ENCODE measurements at regions of chr15 and their contacts with region 1.

Region 1: GRCh38 chr15:79184465-79184892 is 93.9 kb upstream of the RASGRF1 start:
- DNase-seq: peak; percentile 75

Region 2: DNA sequence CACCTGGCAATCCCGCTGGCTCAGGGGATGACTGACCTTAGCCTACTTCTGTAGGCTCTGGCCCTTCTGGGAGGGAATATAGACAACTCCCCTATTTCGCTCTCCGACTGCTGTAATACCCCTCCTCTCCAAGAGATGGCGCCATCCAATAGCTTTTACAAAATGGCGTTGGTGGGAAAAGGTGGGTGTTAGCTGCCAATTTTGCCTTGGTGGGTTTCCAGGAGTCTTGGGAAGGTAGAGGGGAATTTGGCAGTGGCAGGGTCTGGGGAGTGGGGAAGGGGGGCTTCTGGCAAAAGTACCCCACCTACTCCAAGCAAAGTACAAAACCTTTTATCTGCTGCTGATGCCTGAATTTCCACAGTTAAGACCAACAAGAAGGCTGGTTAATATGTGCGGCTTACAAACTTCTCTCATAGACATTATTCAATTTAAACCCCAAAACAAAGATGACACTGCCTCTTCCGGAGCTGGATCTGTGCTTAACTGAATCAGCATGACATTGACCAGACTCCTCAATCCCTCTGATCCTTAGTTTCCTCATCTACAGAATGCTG is 156.0 kb before region 1 on chr15:
- CTCF ChIA-PET with region 1: interaction called, 135 read pairs
- POLR2A ChIA-PET with region 1: no interaction called
- DNase-seq: peak; percentile 84

Region 3: GRCh38 chr15:79157631-79158592 is 26.6 kb before region 1 on chr15:
- CTCF ChIA-PET with region 1: interaction called, 11 read pairs
- POLR2A ChIA-PET with region 1: no interaction called
- DNase-seq: no peak

Region 4: DNA sequence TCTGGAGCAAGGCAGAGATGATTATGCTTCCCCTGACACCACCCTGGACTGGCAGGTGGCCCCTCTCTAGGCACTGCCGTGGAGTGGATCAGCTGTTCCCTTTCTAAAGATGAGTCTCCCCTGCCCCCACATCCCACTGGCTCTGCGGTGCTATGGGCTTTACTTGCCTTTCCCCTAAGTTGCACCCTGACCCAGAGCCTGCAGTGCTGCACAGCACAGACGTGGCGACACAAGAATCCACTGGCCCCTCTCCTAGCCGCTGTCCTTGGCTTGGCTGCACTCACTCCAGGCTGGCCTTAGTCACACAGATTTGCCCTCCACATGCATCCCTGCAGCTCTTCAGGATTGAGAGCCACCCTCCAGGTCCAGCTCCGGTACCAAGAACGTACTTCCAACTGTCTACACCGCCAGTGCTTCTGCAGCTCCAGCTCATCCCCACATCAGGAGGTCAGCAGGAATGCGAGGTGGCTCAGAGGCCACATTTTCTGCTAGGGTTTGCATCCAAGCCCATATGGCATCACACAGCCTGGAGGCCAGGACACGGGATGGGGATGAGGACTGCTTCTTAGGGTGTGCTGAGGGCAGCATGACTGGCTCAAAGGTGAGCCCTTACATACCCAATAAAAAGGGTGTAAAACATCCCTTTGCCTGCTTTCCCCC is 11.5 kb before region 1 on chr15:
- CTCF ChIA-PET with region 1: interaction called, 23 read pairs
- POLR2A ChIA-PET with region 1: interaction called, 5 read pairs
- DNase-seq: no peak